AG04450 (cell line): ENCODE measurements at regions of chr20 and their contacts with region 1.

Region 1: DNA sequence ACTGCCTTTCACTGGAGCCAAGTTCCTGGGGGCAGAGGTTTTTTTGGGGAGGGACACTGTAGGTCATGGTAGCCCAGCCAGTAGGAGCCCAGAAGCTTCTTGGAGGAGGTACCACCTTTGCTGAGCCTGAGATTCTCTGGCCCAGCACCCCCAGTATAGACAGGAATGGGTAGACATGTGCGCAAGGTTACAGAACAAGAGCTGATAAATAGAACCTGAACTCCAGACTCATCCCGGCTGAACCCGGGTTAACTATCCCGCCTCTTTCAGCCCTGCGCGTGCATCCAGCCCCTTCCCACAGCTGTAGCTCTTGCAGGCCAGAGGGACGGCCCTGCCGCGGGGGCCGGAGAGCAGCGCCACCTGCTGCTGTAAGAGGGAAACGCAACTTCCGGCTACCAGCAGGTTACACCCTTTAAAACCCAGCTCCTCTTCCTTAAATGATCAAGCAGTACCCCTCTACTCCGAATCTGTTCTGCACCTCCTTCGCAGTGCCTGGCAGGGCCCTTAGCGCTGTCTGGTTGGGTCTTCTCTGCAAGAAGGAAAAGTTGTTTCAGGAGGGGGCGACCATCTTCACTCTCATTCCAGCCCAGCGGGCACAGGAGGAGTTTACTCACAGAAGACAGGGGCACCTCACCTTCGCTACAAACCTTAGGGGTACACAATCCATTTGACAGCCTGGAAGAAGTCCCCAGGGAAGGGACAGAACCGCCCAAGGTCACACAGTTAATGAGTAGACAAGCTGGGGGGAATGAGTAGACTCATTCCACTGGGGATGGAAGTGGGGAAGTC is 7.5 kb downstream of the SRXN1 start:
- DNase-seq: peak; percentile 23
- H3K4me3 ChIP-seq: no peak overlapping the region
- H3K27ac ChIP-seq: no peak overlapping the region
- H3K27me3 ChIP-seq: peaks cover 5% of the 10 kb centered on the region
- CTCF ChIP-seq: peak; percentile 96

Region 2: GRCh38 chr20:354298-355064 is 291.0 kb before region 1 on chr20:
- CTCF ChIA-PET with region 1: interaction called, 25 read pairs
- POLR2A ChIA-PET with region 1: no interaction called
- DNase-seq: peak; percentile 38
- H3K4me3 ChIP-seq: no peak overlapping the region
- H3K27ac ChIP-seq: no peak overlapping the region
- H3K27me3 ChIP-seq: no peaks in the 10 kb centered on the region
- CTCF ChIP-seq: peak; percentile 93

Region 3: DNA sequence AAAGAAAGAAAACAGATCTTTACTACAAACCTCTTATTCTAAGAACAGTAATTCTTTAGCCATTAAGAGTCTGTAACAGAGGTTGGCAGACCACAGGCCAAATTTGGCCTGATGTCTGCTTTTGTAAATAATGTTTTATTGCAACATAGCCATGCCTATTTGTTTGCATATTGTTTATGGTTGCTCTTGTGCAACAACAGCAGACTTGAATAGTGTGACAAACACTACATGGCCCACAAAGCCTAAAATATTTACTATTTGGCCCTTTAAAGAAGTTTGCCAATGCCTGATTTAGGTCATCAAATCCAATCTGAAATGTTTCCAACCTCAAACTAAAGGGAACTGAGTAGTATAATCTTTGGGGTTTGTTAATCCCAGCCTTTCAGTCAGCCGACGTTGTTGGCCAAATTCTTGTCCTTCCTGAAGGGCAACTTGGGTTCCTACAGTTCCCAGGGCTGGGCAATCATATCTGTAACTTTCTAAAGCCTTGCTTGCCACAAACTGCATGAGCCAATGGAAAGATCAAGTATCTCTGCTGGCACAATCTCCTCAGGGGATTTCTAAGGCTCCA is 149.3 kb before region 1 on chr20:
- CTCF ChIA-PET with region 1: interaction called, 10 read pairs
- POLR2A ChIA-PET with region 1: no interaction called
- DNase-seq: no peak
- H3K4me3 ChIP-seq: no peak overlapping the region
- H3K27ac ChIP-seq: peak overlapping the region; percentile 25
- H3K27me3 ChIP-seq: no peaks in the 10 kb centered on the region
- CTCF ChIP-seq: no peak

Region 4: GRCh38 chr20:561437-562231 is 83.9 kb before region 1 on chr20:
- CTCF ChIA-PET with region 1: interaction called, 60 read pairs
- POLR2A ChIA-PET with region 1: no interaction called
- DNase-seq: peak; percentile 16
- H3K4me3 ChIP-seq: no peak overlapping the region
- H3K27ac ChIP-seq: no peak overlapping the region
- H3K27me3 ChIP-seq: peaks cover 16% of the 10 kb centered on the region
- CTCF ChIP-seq: peak; percentile 100

Region 5: GRCh38 chr20:615514-615913 is 30.0 kb before region 1 on chr20:
- CTCF ChIA-PET with region 1: interaction called, 13 read pairs
- POLR2A ChIA-PET with region 1: no interaction called
- DNase-seq: no peak
- H3K4me3 ChIP-seq: no peak overlapping the region
- H3K27ac ChIP-seq: no peak overlapping the region
- H3K27me3 ChIP-seq: peaks cover 33% of the 10 kb centered on the region
- CTCF ChIP-seq: no peak

Region 6: GRCh38 chr20:658731-659291 is 13.3 kb after region 1 on chr20:
- CTCF ChIA-PET with region 1: interaction called, 21 read pairs
- POLR2A ChIA-PET with region 1: no interaction called
- DNase-seq: no peak
- H3K4me3 ChIP-seq: no peak overlapping the region
- H3K27ac ChIP-seq: no peak overlapping the region
- H3K27me3 ChIP-seq: peaks cover 32% of the 10 kb centered on the region
- CTCF ChIP-seq: no peak

Region 7: GRCh38 chr20:667391-667964 is 22.0 kb after region 1 on chr20:
- CTCF ChIA-PET with region 1: interaction called, 35 read pairs
- POLR2A ChIA-PET with region 1: no interaction called
- DNase-seq: no peak
- H3K4me3 ChIP-seq: no peak overlapping the region
- H3K27ac ChIP-seq: no peak overlapping the region
- H3K27me3 ChIP-seq: peaks cover 66% of the 10 kb centered on the region
- CTCF ChIP-seq: peak; percentile 88